CD4-positive, alpha-beta T cell (primary cell): ENCODE measurements at regions of chr1 and their contacts with region 1.

Region 1: GRCh38 chr1:248686815-248687214 is 15.8 kb downstream of the OR14I1 start:
- DNase-seq: peak in 4 of 14 experiments; percentile 14 to 58 (median 40)
- ATAC-seq: no peak
- H3K4me3 ChIP-seq: no peak overlapping the region
- H3K4me3 Mint-ChIP-seq: no peak overlapping the region
- H3K27ac ChIP-seq: no peak overlapping the region
- H3K27ac Mint-ChIP-seq: no peak overlapping the region
- H3K4me1 ChIP-seq: no peaks in the 10 kb centered on the region
- H3K4me1 Mint-ChIP-seq: no peaks in the 10 kb centered on the region
- H3K27me3 ChIP-seq: no peaks in the 10 kb centered on the region
- H3K27me3 Mint-ChIP-seq: peaks cover 19% of the 10 kb centered on the region
- CTCF ChIP-seq: peak; percentile 38

Region 2: GRCh38 chr1:247936415-247936814 is 750.4 kb before region 1 on chr1:
- CTCF ChIA-PET with region 1: no interaction called
- POLR2A ChIA-PET with region 1: no interaction called
- intact Hi-C with region 1: loop called in 1 of 2 experiments (anchors 2 kb)
- DNase-seq: peak in 2 of 14 experiments; percentile 2 to 18
- ATAC-seq: no peak
- H3K4me3 ChIP-seq: no peak overlapping the region
- H3K4me3 Mint-ChIP-seq: peak overlapping the region; percentile 36
- H3K27ac ChIP-seq: no peak overlapping the region
- H3K27ac Mint-ChIP-seq: no peak overlapping the region
- H3K4me1 ChIP-seq: peaks cover 8% of the 10 kb centered on the region
- H3K4me1 Mint-ChIP-seq: peaks cover 6% of the 10 kb centered on the region
- H3K27me3 ChIP-seq: no peaks in the 10 kb centered on the region
- H3K27me3 Mint-ChIP-seq: no peaks in the 10 kb centered on the region
- CTCF ChIP-seq: no peak

Region 3: DNA sequence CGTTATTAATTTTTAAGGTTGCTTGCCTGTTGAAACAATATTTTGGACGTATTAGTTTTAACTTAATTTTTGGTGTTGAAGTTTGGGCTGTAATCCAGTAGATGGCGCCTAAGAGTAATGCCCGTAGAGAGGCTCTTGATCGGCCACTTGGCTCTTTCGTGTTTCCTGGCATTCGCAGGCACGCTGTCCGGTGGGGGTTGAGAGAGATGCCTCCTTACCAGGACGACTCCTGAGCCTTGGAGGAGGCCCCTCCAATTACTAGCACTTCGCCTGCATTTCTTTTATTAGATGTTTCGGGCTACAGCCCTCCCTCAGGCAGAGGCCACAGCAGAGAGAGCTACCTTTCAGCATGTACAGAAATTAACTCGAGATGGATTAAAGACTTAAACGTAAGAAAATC is 443.6 kb before region 1 on chr1:
- CTCF ChIA-PET with region 1: no interaction called
- POLR2A ChIA-PET with region 1: no interaction called
- intact Hi-C with region 1: loop called (anchors 2 to 10 kb)
- DNase-seq: peak in 6 of 14 experiments; percentile 3 to 59 (median 22)
- ATAC-seq: peak; percentile 57
- H3K4me3 ChIP-seq: no peak overlapping the region
- H3K4me3 Mint-ChIP-seq: no peak overlapping the region
- H3K27ac ChIP-seq: no peak overlapping the region
- H3K27ac Mint-ChIP-seq: no peak overlapping the region
- H3K4me1 ChIP-seq: peaks cover 3% of the 10 kb centered on the region
- H3K4me1 Mint-ChIP-seq: peaks cover 4% of the 10 kb centered on the region
- H3K27me3 ChIP-seq: peaks cover 0 to 5% of the 10 kb centered on the region in 2 experiments
- H3K27me3 Mint-ChIP-seq: peaks cover 19% of the 10 kb centered on the region
- CTCF ChIP-seq: peak; percentile 83

Region 4: DNA sequence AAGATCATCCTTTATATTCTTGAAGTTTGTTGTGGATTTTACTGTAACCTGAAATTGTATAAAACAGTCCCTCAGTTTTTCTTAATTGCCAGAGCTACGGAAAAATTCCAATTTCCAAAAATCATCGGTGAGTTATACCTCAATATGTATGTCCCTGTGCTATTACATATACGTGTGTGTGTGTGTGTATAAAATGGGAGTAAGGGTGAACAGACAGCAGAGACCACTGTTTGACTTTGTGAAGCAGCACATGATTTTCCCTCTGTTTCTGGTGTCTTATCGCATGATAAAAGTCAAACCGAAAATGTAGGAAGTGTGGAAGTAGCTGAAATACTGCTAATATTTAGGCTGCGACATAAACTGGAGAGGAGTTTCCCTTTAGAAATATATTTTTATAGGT is 282.8 kb before region 1 on chr1:
- CTCF ChIA-PET with region 1: no interaction called
- POLR2A ChIA-PET with region 1: no interaction called
- intact Hi-C with region 1: no loop called
- DNase-seq: peak in 3 of 14 experiments; percentile 11 to 37 (median 15)
- ATAC-seq: no peak
- H3K4me3 ChIP-seq: no peak overlapping the region
- H3K4me3 Mint-ChIP-seq: no peak overlapping the region
- H3K27ac ChIP-seq: no peak overlapping the region
- H3K27ac Mint-ChIP-seq: no peak overlapping the region
- H3K4me1 ChIP-seq: no peaks in the 10 kb centered on the region
- H3K4me1 Mint-ChIP-seq: no peaks in the 10 kb centered on the region
- H3K27me3 ChIP-seq: no peaks in the 10 kb centered on the region
- H3K27me3 Mint-ChIP-seq: no peaks in the 10 kb centered on the region
- CTCF ChIP-seq: no peak